ENCODE measurements at regions of chr1 and their contacts with region 1.

Region 1: GRCh38 chr1:245045087-245045881 is 109.5 kb upstream of the KIF26B start:
- DNase-seq: no peak
- H3K4me3 ChIP-seq: no peak overlapping the region
- H3K27ac ChIP-seq: no peak overlapping the region
- H3K4me1 ChIP-seq: no peaks in the 10 kb centered on the region
- H3K27me3 ChIP-seq: no peaks in the 10 kb centered on the region
- CTCF ChIP-seq: no peak

Region 2: DNA sequence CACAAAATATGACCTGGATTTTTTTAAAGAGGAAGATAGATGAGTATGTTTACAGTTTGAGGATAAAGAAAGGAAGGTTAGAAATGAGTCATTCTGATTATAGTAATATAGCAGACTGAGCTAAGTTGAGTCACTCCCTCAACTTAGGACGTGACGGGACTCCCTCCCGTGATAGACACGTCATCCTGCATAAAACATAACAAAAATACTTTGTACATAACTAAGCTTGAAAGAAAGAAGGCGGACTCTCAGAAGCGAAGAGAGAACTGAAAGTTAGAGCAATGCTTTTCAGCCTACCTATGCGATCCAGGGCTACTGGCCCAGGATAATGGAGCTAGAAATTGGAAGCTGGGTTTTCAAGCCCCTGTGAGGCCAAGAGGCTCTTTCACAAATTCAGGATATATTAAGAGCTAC is 445.3 kb before region 1 on chr1:
- CTCF ChIA-PET with region 1: interaction called, 7 read pairs
- POLR2A ChIA-PET with region 1: no interaction called
- intact Hi-C with region 1: loop called (anchors 2 kb)
- DNase-seq: peak; percentile 55
- H3K4me3 ChIP-seq: no peak overlapping the region
- H3K27ac ChIP-seq: no peak overlapping the region
- H3K4me1 ChIP-seq: no peaks in the 10 kb centered on the region
- H3K27me3 ChIP-seq: no peaks in the 10 kb centered on the region
- CTCF ChIP-seq: no peak

Region 3: GRCh38 chr1:244796718-244797406 is 248.4 kb before region 1 on chr1:
- CTCF ChIA-PET with region 1: interaction called, 15 read pairs
- POLR2A ChIA-PET with region 1: no interaction called
- intact Hi-C with region 1: loop called (anchors 1 kb)
- DNase-seq: peak; percentile 74
- H3K4me3 ChIP-seq: no peak overlapping the region
- H3K27ac ChIP-seq: no peak overlapping the region
- H3K4me1 ChIP-seq: no peaks in the 10 kb centered on the region
- H3K27me3 ChIP-seq: no peaks in the 10 kb centered on the region
- CTCF ChIP-seq: peak; percentile 88

Region 4: GRCh38 chr1:244835276-244836134 is 209.8 kb before region 1 on chr1 and contains the start of gene COX20:
- CTCF ChIA-PET with region 1: interaction called, 3 read pairs
- POLR2A ChIA-PET with region 1: no interaction called
- intact Hi-C with region 1: loop called (anchors 10 kb)
- DNase-seq: peak; percentile 95
- H3K4me3 ChIP-seq: peak within 1 kb of the TSS; percentile 72
- H3K27ac ChIP-seq: peak within 1 kb of the TSS; percentile 97
- H3K4me1 ChIP-seq: peaks cover 23% of the 10 kb centered on the region
- H3K27me3 ChIP-seq: no peaks in the 10 kb centered on the region
- CTCF ChIP-seq: no peak
- total RNA-seq, gene COX20: 48.0 and 59.0 TPM in 2 replicates

Region 5: GRCh38 chr1:244864253-244865027 is 180.8 kb before region 1 on chr1 and contains the start of gene HNRNPU:
- CTCF ChIA-PET with region 1: interaction called, 3 read pairs
- POLR2A ChIA-PET with region 1: no interaction called
- intact Hi-C with region 1: loop called (anchors 5 kb)
- DNase-seq: peak; percentile 98
- H3K4me3 ChIP-seq: peak within 1 kb of the TSS; percentile 82
- H3K27ac ChIP-seq: peak within 1 kb of the TSS; percentile 99
- H3K4me1 ChIP-seq: peaks cover 21% of the 10 kb centered on the region
- H3K27me3 ChIP-seq: no peaks in the 10 kb centered on the region
- CTCF ChIP-seq: peak; percentile 36; the same call in 1 of the 2 replicates
- total RNA-seq, gene HNRNPU: 720 and 746 TPM in 2 replicates

Region 6: GRCh38 chr1:244970661-244971551 is 74.4 kb before region 1 on chr1:
- CTCF ChIA-PET with region 1: interaction called, 5 read pairs
- POLR2A ChIA-PET with region 1: no interaction called
- intact Hi-C with region 1: loop called (anchors 5 kb)
- DNase-seq: peak; percentile 98
- H3K4me3 ChIP-seq: peak overlapping the region; percentile 86
- H3K27ac ChIP-seq: peak overlapping the region; percentile 99
- H3K4me1 ChIP-seq: peaks cover 15% of the 10 kb centered on the region
- H3K27me3 ChIP-seq: no peaks in the 10 kb centered on the region
- CTCF ChIP-seq: peak; percentile 73

Measured in A673 (cell line).